ENCODE measurements at regions of chr9 and their contacts with region 1.

Region 1: DNA sequence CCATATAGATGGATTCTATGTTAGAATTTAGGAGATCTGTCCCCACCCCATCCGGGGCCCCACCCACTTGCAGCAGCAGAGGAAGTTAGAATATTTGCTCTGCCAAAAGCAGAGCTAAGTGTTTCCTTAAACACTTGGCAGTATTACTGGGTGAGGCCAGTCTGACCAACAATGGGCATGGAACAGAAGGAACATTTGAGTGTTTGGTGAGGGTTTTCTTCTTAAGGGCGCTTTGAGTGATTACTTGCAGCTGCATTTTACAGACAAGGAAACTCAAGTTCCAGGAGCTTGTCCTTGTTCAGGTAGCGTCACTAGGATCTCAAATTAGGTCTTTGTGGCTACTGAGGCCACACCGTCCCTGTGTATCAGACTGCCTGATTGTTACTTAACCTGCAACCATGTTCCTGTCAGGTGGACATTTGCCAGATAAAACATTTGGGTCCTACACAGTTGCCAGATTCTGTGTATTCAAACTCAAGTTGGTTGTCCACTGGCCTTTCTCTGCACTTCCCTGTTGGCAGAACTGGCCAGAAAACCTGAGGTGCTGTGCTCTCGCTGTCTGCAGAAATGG is 59.3 kb downstream of the SLC46A2 start:
- DNase-seq: no peak
- ATAC-seq: no peak
- H3K4me3 ChIP-seq: no peak overlapping the region
- H3K27ac ChIP-seq: no peak overlapping the region
- H3K4me1 ChIP-seq: no peaks in the 10 kb centered on the region
- H3K27me3 ChIP-seq: no peaks in the 10 kb centered on the region
- CTCF ChIP-seq: no peak

Region 2: DNA sequence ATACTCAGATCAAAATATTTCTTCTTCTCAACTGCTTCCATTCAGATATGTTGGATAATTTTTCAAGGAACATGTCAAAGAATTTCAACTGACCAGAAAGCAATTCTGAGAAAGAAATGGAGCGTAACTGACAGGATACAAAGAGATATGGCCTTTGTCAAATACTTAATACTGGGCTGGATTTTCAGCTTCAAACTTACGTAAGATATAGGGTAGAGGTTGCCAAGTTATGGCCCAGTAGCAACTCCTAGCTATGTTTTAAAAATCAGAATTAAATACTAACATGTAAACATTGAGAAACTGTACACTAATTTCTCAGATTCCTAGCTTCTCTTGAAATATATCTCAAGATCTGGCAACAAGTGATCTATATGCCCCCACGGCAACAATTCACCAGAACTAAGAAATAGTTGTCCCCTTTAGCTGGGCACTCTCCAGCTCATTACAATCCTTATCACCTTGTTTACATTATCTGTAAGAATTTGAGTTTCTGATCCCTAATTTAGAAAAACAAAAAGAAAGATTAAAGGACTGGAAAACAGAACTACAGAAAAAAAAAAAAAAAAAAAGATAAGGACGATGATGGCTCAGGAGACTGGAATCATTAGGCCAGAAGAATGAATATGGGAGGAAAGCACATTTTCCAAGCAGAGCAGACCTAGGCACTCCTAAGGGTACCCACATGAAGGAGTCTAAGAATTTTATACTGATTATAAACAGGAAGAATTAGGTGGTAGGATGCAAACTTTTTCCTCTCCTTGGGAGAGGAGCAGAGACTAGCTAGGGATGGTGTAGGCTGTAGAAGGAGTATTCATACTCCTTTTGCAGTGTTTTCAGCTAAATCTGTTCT is 136.4 kb before region 1 on chr9:
- CTCF ChIA-PET with region 1: no interaction called
- POLR2A ChIA-PET with region 1: interaction called, 14 read pairs
- in situ Hi-C with region 1: no loop called
- intact Hi-C with region 1: no loop called
- DNase-seq: no peak
- ATAC-seq: no peak
- H3K4me3 ChIP-seq: no peak overlapping the region
- H3K27ac ChIP-seq: no peak overlapping the region
- H3K4me1 ChIP-seq: no peaks in the 10 kb centered on the region
- H3K27me3 ChIP-seq: no peaks in the 10 kb centered on the region
- CTCF ChIP-seq: no peak

Region 3: GRCh38 chr9:112809351-112809848 is 22.0 kb before region 1 on chr9:
- CTCF ChIA-PET with region 1: no interaction called
- POLR2A ChIA-PET with region 1: interaction called, 10 read pairs
- in situ Hi-C with region 1: no loop called
- intact Hi-C with region 1: no loop called
- DNase-seq: no peak
- ATAC-seq: no peak
- H3K4me3 ChIP-seq: no peak overlapping the region
- H3K27ac ChIP-seq: no peak overlapping the region
- H3K4me1 ChIP-seq: no peaks in the 10 kb centered on the region
- H3K27me3 ChIP-seq: no peaks in the 10 kb centered on the region
- CTCF ChIP-seq: no peak